ENCODE measurements at regions of chr10 and their contacts with region 1.

Region 1: GRCh38 chr10:30701451-30702173 is 72.1 kb upstream of the LYZL2 start:
- DNase-seq: peak; percentile 93
- H3K4me3 Mint-ChIP-seq: peak overlapping the region; percentile 50
- H3K27ac Mint-ChIP-seq: peak overlapping the region; percentile 88
- H3K4me1 Mint-ChIP-seq: peaks cover 85% of the 10 kb centered on the region
- H3K27me3 Mint-ChIP-seq: no peaks in the 10 kb centered on the region

Region 2: GRCh38 chr10:30413996-30414576 is 287.5 kb before region 1 on chr10:
- CTCF ChIA-PET with region 1: no interaction called
- intact Hi-C with region 1: loop called (anchors 1 kb)
- DNase-seq: peak; percentile 43
- H3K4me3 Mint-ChIP-seq: no peak overlapping the region
- H3K27ac Mint-ChIP-seq: no peak overlapping the region
- H3K4me1 Mint-ChIP-seq: peaks cover 15% of the 10 kb centered on the region
- H3K27me3 Mint-ChIP-seq: no peaks in the 10 kb centered on the region

Region 3: GRCh38 chr10:30542001-30542894 is 159.4 kb before region 1 on chr10:
- CTCF ChIA-PET with region 1: no interaction called
- intact Hi-C with region 1: no loop called
- DNase-seq: no peak
- H3K4me3 Mint-ChIP-seq: no peak overlapping the region
- H3K27ac Mint-ChIP-seq: no peak overlapping the region
- H3K4me1 Mint-ChIP-seq: peaks cover 9% of the 10 kb centered on the region
- H3K27me3 Mint-ChIP-seq: no peaks in the 10 kb centered on the region

Region 4: GRCh38 chr10:30687698-30688219 is 13.9 kb before region 1 on chr10:
- CTCF ChIA-PET with region 1: interaction called, 23 read pairs
- intact Hi-C with region 1: no loop called
- DNase-seq: peak; percentile 91
- H3K4me3 Mint-ChIP-seq: no peak overlapping the region
- H3K27ac Mint-ChIP-seq: no peak overlapping the region
- H3K4me1 Mint-ChIP-seq: peaks cover 7% of the 10 kb centered on the region
- H3K27me3 Mint-ChIP-seq: peaks cover 17% of the 10 kb centered on the region

Region 5: GRCh38 chr10:31101123-31101522 is 399.5 kb after region 1 on chr10:
- CTCF ChIA-PET with region 1: no interaction called
- intact Hi-C with region 1: loop called (anchors 1 kb)
- DNase-seq: peak; percentile 91
- H3K4me3 Mint-ChIP-seq: peak overlapping the region; percentile 50
- H3K27ac Mint-ChIP-seq: peak overlapping the region; percentile 85
- H3K4me1 Mint-ChIP-seq: peaks cover 44% of the 10 kb centered on the region
- H3K27me3 Mint-ChIP-seq: no peaks in the 10 kb centered on the region

Region 6: DNA sequence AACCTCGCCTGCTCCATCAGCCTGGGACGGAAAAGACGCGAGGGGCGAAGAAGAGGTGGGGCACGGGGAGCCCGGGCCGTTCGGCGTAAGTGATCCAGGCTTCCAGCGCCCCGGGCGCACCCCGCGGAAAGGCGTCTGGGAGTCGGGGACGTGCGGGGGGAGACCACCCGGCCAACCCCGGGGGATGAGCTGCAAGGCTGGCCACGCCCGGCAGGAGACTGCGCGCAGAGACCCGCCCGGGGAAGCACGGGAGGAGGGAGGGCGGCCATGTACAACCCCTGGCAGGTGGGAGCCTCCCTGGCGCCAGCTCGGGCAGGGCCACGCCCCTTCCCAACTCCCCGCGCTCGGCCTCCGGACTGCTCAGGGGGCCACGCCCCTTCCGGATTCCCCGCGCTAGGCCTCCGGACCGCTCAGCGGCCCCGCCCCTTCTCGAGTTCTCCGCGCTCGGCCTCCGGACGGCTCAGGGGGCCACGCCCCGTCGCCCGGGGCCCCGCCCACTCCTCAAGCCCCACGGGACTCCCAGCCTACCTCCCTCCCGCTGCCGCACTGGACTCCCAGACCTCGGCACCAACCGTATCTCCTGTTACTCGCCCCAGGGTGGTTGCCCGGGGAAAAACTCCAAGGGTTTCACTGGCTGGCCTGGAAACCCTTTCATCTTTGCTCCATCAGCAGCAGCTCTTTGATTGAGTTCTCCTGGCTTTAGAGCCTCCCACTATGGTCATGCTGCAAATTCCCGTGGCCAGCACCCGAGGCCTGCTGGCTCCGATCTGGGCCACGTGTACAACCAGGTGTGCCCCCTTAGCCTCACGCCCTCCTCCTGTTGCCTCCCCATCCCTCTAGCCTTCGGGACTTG is 901.8 kb after region 1 on chr10:
- CTCF ChIA-PET with region 1: no interaction called
- intact Hi-C with region 1: loop called (anchors 5 kb)
- DNase-seq: peak; percentile 92
- H3K4me3 Mint-ChIP-seq: peak overlapping the region; percentile 86
- H3K27ac Mint-ChIP-seq: peak overlapping the region; percentile 58
- H3K4me1 Mint-ChIP-seq: peaks cover 31% of the 10 kb centered on the region
- H3K27me3 Mint-ChIP-seq: peaks cover 2% of the 10 kb centered on the region

Region 7: DNA sequence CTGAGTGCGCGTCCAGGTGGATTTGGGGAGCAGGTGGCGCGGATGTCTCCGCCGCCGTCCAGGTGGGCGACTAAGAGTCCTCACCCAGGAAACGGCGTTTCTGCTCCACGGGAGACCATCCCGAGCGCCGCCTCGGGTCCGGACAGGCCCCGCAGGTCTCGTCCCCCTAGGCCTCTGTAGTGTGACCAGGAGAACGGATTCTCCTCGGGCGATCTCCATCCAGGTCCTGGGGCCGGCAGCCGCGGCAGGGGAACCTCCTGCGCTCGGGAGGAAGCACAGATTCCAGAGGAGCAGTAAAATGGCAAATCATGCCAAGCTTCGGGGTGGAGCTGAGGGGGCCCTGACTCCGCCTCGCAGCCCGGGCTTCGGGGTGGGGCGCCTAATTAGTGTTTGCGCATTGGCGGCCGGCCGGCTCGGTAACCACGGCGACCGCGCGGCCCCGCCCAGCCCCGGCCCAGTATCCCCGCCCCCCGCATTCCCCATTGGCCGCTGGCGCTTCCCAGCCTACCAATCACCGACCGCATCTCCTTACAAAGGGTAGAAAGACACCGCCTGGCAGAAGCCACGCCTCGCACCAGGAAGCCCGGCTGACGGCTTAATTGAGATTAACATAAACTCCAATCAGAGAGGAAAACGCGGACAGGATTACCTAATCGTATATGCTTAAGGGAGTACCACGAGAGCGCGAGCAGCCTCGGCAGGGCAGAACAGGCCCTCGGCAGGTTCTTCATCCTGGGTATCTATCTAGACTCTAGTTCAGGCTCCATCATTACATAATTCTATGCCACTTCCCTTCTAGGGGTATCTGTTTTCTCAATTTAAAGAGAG is 1058.4 kb after region 1 on chr10:
- CTCF ChIA-PET with region 1: no interaction called
- intact Hi-C with region 1: loop called (anchors 1 kb)
- DNase-seq: peak; percentile 96
- H3K4me3 Mint-ChIP-seq: peak overlapping the region; percentile 94
- H3K27ac Mint-ChIP-seq: peak overlapping the region; percentile 95
- H3K4me1 Mint-ChIP-seq: peaks cover 18% of the 10 kb centered on the region
- H3K27me3 Mint-ChIP-seq: no peaks in the 10 kb centered on the region